ENCODE measurements at regions of chr6 and their contacts with region 1.

Region 1: GRCh38 chr6:53437557-53438202 is 88.9 kb upstream of the ELOVL5 start:
- DNase-seq: no peak
- ATAC-seq: peak; percentile 77
- H3K4me3 Mint-ChIP-seq: no peak overlapping the region
- H3K27ac Mint-ChIP-seq: no peak overlapping the region
- H3K4me1 Mint-ChIP-seq: peaks cover 20% of the 10 kb centered on the region
- H3K27me3 Mint-ChIP-seq: no peaks in the 10 kb centered on the region
- CTCF ChIP-seq: no peak

Region 2: GRCh38 chr6:51613554-51613953 is 1824.1 kb before region 1 on chr6:
- CTCF ChIA-PET with region 1: no interaction called
- POLR2A ChIA-PET with region 1: no interaction called
- intact Hi-C with region 1: no loop called
- DNase-seq: no peak
- ATAC-seq: no peak
- H3K4me3 Mint-ChIP-seq: no peak overlapping the region
- H3K27ac Mint-ChIP-seq: no peak overlapping the region
- H3K4me1 Mint-ChIP-seq: no peaks in the 10 kb centered on the region
- H3K27me3 Mint-ChIP-seq: no peaks in the 10 kb centered on the region
- CTCF ChIP-seq: no peak

Region 3: DNA sequence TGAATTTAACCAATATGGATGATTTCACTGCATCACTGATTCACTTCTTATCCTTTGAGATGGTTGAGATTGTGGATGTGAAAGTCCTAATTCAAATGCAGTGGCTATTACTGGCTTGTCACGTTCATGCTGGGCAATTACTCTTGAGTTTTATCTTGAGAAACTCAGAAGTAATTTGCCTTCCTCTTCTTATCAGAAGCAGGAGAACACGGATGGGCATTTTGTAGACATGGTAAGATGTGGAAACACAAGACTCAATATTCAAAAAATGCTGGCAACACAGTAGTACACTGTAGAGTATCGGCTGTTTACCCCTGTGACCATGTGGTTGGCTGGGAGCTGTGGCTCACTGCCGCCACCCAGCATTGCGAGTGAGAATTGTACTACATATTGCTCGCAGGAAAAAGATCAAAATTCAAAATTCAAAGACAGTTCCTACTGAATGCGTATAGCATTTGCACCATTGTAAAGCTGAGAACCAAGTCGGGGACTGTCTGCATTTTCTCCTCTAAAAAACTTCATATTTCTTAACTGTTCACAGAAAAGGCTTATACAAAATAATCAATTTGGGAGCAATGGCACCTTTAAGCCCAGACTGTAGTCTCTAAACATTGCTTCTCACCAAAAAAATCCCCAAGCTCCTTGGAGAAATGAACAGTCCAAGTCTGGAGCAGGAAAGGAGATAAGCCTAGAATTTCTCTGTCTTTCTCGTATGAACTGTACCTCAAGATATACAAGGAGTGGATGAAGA is 27.0 kb before region 1 on chr6:
- CTCF ChIA-PET with region 1: interaction called, 18 read pairs
- POLR2A ChIA-PET with region 1: interaction called, 3 read pairs
- intact Hi-C with region 1: loop called (anchors 1 kb)
- DNase-seq: peak; percentile 20
- ATAC-seq: peak; percentile 98
- H3K4me3 Mint-ChIP-seq: peak overlapping the region; percentile 70
- H3K27ac Mint-ChIP-seq: peak overlapping the region; percentile 82
- H3K4me1 Mint-ChIP-seq: peaks cover 9% of the 10 kb centered on the region
- H3K27me3 Mint-ChIP-seq: no peaks in the 10 kb centered on the region
- CTCF ChIP-seq: no peak

Region 4: GRCh38 chr6:53461041-53461656 is 23.5 kb after region 1 on chr6:
- CTCF ChIA-PET with region 1: interaction called, 4 read pairs
- POLR2A ChIA-PET with region 1: interaction called, 5 read pairs
- intact Hi-C with region 1: loop called (anchors 2 kb)
- DNase-seq: no peak
- ATAC-seq: peak; percentile 72
- H3K4me3 Mint-ChIP-seq: peak overlapping the region; percentile 72
- H3K27ac Mint-ChIP-seq: peak overlapping the region; percentile 96
- H3K4me1 Mint-ChIP-seq: peaks cover 94% of the 10 kb centered on the region
- H3K27me3 Mint-ChIP-seq: no peaks in the 10 kb centered on the region
- CTCF ChIP-seq: no peak